CD14-positive monocyte (primary cell): ENCODE measurements at regions of chr22 and their contacts with region 1.

Region 1: DNA sequence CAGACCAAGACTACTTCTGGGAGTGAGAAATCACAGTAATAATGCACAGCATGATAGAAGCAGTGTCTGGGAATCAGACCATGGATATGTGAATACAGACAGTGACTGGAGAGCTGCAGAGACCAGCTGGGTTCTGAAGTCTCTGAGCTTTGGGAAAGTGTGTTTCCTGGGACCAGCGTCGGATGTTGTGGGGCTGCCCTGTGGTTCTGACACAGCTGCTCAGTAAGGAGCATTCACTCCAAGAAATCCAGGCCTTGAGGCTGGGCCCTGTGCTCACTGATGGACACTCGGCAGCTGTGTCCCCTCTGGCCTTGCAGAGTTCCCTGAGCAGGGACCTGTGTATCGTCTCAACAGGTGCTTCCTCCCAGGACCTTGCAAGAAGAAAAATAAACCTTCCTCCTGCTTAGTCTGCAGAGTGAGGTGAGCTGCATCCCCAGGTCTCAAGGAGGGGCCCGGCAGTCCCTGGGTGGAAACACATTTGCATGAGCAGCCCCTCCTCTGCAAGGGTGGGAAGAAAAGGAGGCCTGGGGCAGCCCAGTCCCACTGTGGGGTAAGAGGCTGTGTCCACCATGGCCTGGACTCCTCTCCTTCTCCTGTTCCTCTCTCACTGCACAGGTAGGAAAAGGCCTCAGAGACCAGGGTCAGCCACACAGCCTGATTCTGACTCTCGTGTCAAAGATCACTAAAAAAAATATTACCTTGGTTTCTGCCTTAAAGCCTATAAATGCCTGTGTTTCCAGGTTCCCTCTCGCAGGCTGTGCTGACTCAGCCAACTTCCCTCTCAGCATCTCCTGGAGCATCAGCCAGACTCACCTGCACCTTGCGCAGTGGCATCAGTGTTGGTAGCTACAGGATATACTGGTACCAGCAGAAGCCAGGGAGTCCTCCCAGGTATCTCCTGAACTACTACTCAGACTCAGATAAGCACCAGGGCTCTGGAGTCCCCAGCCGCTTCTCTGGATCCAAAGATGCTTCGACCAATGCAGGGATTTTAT is 108.1 kb downstream of the VPREB1 start:
- DNase-seq: no peak
- H3K4me3 ChIP-seq: no peak overlapping the region
- H3K4me3 Mint-ChIP-seq: no peak overlapping the region
- H3K27ac ChIP-seq: no peak overlapping the region
- H3K27ac Mint-ChIP-seq: no peak overlapping the region
- H3K4me1 ChIP-seq: peaks cover 0 to 4% of the 10 kb centered on the region in 2 donors
- H3K4me1 Mint-ChIP-seq: peaks cover 3% of the 10 kb centered on the region
- H3K27me3 ChIP-seq: peaks cover 0 to 3% of the 10 kb centered on the region in 2 donors
- H3K27me3 Mint-ChIP-seq: peaks cover 8 to 14% (median 13%) of the 10 kb centered on the region in 3 donors
- CTCF ChIP-seq: no peak

Region 2: DNA sequence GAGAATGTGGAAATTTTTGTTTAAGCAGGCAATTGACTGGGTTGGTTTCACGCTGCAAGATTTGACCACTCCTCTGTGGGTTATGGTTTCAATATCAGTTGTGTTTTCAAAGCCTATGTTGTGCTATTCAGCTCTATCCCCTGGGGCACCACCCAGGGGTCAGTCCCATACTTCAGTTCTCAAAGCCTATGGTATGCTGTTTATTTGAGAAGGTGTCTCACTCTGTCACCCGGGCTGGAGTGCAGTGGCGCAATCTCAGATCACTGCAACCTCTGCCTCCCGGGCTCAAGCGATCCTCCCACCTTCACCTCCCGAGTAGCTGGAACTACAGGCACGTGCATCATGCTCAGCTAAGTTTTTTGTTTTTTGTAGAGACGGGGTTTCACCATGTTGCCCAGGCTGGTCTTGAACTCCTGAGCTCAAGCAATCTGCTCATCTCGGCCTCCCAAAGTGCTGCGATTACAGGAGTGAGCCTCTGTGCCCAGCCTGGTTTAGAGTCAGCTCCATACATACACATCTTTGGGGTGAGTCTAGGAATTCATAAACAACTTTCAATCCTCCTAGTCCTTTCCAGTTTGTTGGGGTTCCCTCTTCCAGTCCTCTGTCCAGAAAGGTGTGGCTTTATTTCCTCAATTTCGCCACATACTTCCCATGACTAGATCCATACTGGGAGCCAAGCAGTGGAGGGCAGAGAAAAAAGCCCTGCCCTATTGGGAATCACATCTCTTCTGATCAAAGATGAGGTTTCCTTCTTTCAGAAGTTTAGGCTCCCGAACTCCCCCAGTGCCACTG is 450.2 kb before region 1 on chr22:
- intact Hi-C with region 1: no loop called
- DNase-seq: no peak
- H3K4me3 ChIP-seq: no peak overlapping the region
- H3K4me3 Mint-ChIP-seq: no peak overlapping the region
- H3K27ac ChIP-seq: no peak overlapping the region
- H3K27ac Mint-ChIP-seq: peak overlapping the region in 1 of 7 donors; percentile 56
- H3K4me1 ChIP-seq: no peaks in the 10 kb centered on the region
- H3K4me1 Mint-ChIP-seq: no peaks in the 10 kb centered on the region
- H3K27me3 ChIP-seq: no peaks in the 10 kb centered on the region
- H3K27me3 Mint-ChIP-seq: peaks cover 3 to 5% (median 3%) of the 10 kb centered on the region in 3 donors
- CTCF ChIP-seq: no peak

Region 3: DNA sequence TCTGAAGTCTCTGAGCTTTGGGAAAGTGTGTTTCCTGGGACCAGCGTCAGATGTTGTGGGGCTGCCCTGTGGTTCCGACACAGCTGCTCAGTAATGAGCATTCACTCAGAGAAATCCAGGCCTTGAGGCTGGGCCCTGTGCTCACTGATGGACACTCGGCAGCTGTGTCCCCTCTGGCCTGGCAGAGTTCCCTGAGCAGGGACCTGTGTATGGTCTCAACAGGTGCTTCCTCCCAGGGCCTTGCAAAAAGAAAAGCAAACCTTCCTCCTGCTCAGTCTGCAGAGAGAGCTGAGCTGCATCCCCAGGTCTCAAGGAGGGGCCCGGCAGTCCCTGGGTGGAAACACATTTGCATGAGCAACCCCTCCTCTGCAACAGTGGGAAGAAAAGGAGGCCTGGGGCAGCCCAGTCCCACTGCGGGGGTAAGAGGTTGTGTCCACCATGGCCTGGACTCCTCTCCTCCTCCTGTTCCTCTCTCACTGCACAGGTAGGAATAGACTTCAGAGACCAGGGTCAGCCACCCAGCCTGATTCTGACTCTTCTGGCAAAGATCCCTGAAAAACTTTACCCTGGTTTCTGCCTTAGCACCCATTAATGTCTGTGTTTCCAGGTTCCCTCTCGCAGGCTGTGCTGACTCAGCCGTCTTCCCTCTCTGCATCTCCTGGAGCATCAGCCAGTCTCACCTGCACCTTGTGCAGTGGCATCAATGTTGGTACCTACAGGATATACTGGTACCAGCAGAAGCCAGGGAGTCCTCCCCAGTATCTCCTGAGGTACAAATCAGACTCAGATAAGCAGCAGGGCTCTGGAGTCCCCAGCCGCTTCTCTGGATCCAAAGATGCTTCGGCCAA is 23.1 kb after region 1 on chr22:
- intact Hi-C with region 1: loop called in 1 of 2 experiments (anchors 2 kb)
- DNase-seq: no peak
- H3K4me3 ChIP-seq: no peak overlapping the region
- H3K4me3 Mint-ChIP-seq: no peak overlapping the region
- H3K27ac ChIP-seq: no peak overlapping the region
- H3K27ac Mint-ChIP-seq: no peak overlapping the region
- H3K4me1 ChIP-seq: no peaks in the 10 kb centered on the region
- H3K4me1 Mint-ChIP-seq: peaks cover 3% of the 10 kb centered on the region
- H3K27me3 ChIP-seq: no peaks in the 10 kb centered on the region
- H3K27me3 Mint-ChIP-seq: peaks cover 0 to 9% (median 6%) of the 10 kb centered on the region in 3 donors
- CTCF ChIP-seq: no peak

Region 4: DNA sequence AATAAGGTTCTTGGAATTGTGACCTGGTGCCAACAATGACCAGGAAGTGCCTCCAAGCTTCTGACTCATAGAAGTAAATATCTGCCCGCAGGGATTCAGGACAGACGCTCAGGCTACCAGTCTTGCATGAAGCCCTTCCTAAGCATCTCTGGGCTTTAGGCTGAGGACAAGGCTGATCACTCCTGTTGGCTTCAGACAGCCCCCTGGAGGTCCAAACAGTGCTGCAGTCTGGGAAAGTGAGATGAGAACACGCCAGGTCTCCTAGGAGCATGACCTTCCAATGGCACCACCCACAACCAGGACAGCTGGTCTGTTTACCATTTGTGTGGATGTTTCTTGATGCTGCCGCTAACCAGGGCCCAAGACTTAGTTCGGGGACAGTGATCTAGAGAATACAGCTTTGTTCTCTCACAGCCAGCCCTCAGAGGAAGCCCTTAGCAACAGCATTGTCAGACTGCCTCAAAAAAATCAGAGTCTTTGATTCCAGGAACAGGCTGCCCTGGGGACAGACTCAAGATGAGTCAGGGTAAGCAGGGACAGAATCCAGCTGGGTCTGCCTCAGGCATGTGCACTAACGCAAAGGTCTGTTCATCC is 44.7 kb after region 1 on chr22:
- intact Hi-C with region 1: loop called in 1 of 2 experiments (anchors 5 kb)
- DNase-seq: no peak
- H3K4me3 ChIP-seq: no peak overlapping the region
- H3K4me3 Mint-ChIP-seq: no peak overlapping the region
- H3K27ac ChIP-seq: no peak overlapping the region
- H3K27ac Mint-ChIP-seq: no peak overlapping the region
- H3K4me1 ChIP-seq: no peaks in the 10 kb centered on the region
- H3K4me1 Mint-ChIP-seq: no peaks in the 10 kb centered on the region
- H3K27me3 ChIP-seq: no peaks in the 10 kb centered on the region
- H3K27me3 Mint-ChIP-seq: peaks cover 1 to 11% (median 4%) of the 10 kb centered on the region in 3 donors
- CTCF ChIP-seq: no peak